ENCODE measurements at regions of chr3 and their contacts with region 1.

Region 1: GRCh38 chr3:126259411-126260391 is 79.3 kb upstream of the ALDH1L1 start:
- DNase-seq: peak; percentile 64 to 69
- H3K4me3 ChIP-seq: peak overlapping the region in 2 of 4 donors; percentile 8 to 24
- H3K27ac ChIP-seq: peak overlapping the region in 1 of 5 donors; percentile 76
- H3K4me1 ChIP-seq: peaks cover 0 to 17% (median 9%) of the 10 kb centered on the region in 4 donors
- H3K27me3 ChIP-seq: no peaks in the 10 kb centered on the region
- CTCF ChIP-seq: peak in 5 of 7 experiments; percentile 63 to 88 (median 76)
- EP300 ChIP-seq: peak; percentile 57
- POLR2A ChIP-seq: no peak

Region 2: GRCh38 chr3:126197854-126198584 is 61.7 kb before region 1 on chr3:
- intact Hi-C with region 1: no loop called
- DNase-seq: peak; percentile 65 to 69
- H3K4me3 ChIP-seq: no peak overlapping the region
- H3K27ac ChIP-seq: no peak overlapping the region
- H3K4me1 ChIP-seq: peaks cover 0 to 4% (median 0%) of the 10 kb centered on the region in 4 donors
- H3K27me3 ChIP-seq: no peaks in the 10 kb centered on the region
- CTCF ChIP-seq: peak in 5 of 7 experiments; percentile 13 to 72 (median 56)
- EP300 ChIP-seq: no peak
- POLR2A ChIP-seq: no peak

Region 3: DNA sequence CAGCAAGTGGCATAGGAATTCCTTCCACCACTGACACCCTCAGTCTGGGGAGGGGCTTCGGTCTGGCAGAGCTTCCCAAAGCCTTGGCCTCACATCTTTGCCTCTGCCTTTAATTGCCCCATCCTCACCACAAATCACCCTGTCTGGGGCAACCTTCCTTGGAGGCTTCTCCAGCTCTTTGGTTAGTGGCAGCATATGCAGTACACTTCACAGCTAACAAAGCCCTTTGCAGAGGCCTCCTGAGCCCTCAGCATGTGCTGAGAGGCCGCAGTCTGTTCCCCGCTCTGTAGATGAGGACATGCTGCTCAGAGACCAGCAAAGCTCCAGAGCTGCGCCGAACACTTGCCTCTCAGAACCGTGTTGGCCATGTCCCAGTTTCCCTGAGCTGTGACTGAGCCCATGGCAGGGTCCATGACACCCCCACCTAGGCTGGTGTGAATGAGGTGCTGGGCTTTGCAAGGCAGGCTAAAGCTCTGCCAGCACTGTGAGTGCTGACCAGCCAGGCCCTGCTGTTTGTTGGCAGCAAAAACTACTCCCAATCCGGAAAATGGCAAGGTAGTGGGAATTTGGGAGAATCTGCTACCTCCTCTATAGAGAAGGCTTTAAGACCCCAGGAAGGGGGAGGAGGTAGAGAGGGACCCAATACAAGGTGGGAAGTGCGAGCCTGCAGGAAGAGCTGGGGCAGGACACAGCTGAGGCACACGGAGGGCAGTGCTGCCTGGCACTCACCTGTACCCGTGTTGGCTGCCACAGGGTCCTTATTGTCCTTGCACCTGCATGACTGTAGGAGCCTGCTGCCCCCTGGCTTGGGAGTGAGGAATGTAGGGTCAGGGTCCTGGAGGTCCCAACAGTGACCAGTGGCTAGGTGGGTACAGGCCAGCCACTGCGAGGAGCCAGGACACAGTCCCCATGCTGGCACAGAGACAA is 105.9 kb after region 1 on chr3:
- intact Hi-C with region 1: loop called (anchors 10 kb)
- DNase-seq: no peak
- H3K4me3 ChIP-seq: no peak overlapping the region
- H3K27ac ChIP-seq: no peak overlapping the region
- H3K4me1 ChIP-seq: no peaks in the 10 kb centered on the region
- H3K27me3 ChIP-seq: peaks cover 0 to 7% (median 7%) of the 10 kb centered on the region in 3 donors
- CTCF ChIP-seq: no peak
- EP300 ChIP-seq: no peak
- POLR2A ChIP-seq: no peak

Region 4: GRCh38 chr3:126394575-126395228 is 135.0 kb after region 1 on chr3 and contains the start of gene CFAP100:
- intact Hi-C with region 1: loop called (anchors 5 kb)
- DNase-seq: peak; percentile 44 to 89
- H3K4me3 ChIP-seq: peak within 1 kb of the TSS; percentile 29 to 42 (median 34)
- H3K27ac ChIP-seq: no peak within 1 kb of the TSS
- H3K4me1 ChIP-seq: peaks cover 6 to 12% (median 7%) of the 10 kb centered on the region in 4 donors
- H3K27me3 ChIP-seq: peaks cover 0 to 37% (median 19%) of the 10 kb centered on the region in 3 donors
- CTCF ChIP-seq: no peak
- EP300 ChIP-seq: no peak
- POLR2A ChIP-seq: no peak
- total RNA-seq, gene CFAP100: not detected

Region 5: GRCh38 chr3:126475413-126476114 is 215.9 kb after region 1 on chr3 and contains the start of gene ZXDC:
- intact Hi-C with region 1: no loop called
- DNase-seq: peak; percentile 97 to 99
- H3K4me3 ChIP-seq: peak within 1 kb of the TSS; percentile 67 to 90 (median 70)
- H3K27ac ChIP-seq: peak within 1 kb of the TSS; percentile 91 to 99 (median 98)
- H3K4me1 ChIP-seq: peaks cover 33 to 52% (median 46%) of the 10 kb centered on the region in 4 donors
- H3K27me3 ChIP-seq: no peaks in the 10 kb centered on the region
- CTCF ChIP-seq: peak in 1 of 7 experiments; percentile 32
- EP300 ChIP-seq: no peak
- POLR2A ChIP-seq: no peak
- total RNA-seq, gene ZXDC: 16.9 to 73.2 (median 44.5) TPM

Measured in stomach (tissue), 19 donors.